ENCODE measurements at regions of chr20 and their contacts with region 1.

Region 1: GRCh38 chr20:34312544-34313217 is 9.5 kb upstream of the AHCY start:
- DNase-seq: peak; percentile 84 to 86 (median 84)
- H3K4me3 ChIP-seq: no peak overlapping the region
- H3K4me3 Mint-ChIP-seq: peak overlapping the region in 3 of 8 donors; percentile 41 to 58 (median 55)
- H3K27ac ChIP-seq: no peak overlapping the region
- H3K27ac Mint-ChIP-seq: peak overlapping the region in 2 of 7 donors; percentile 64 to 70
- H3K4me1 ChIP-seq: peaks cover 9% of the 10 kb centered on the region
- H3K4me1 Mint-ChIP-seq: peaks cover 5 to 14% (median 10%) of the 10 kb centered on the region in 4 donors
- H3K27me3 ChIP-seq: peaks cover 12% of the 10 kb centered on the region
- H3K27me3 Mint-ChIP-seq: peaks cover 16 to 23% of the 10 kb centered on the region in 2 donors

Region 2: GRCh38 chr20:34295284-34295683 is 17.4 kb before region 1 on chr20:
- CTCF ChIA-PET with region 1: interaction called, 30 read pairs
- POLR2A ChIA-PET with region 1: no interaction called
- intact Hi-C with region 1: no loop called
- DNase-seq: no peak
- H3K4me3 ChIP-seq: no peak overlapping the region
- H3K4me3 Mint-ChIP-seq: no peak overlapping the region
- H3K27ac ChIP-seq: no peak overlapping the region
- H3K27ac Mint-ChIP-seq: no peak overlapping the region
- H3K4me1 ChIP-seq: no peaks in the 10 kb centered on the region
- H3K4me1 Mint-ChIP-seq: peaks cover 0 to 3% (median 0%) of the 10 kb centered on the region in 4 donors
- H3K27me3 ChIP-seq: no peaks in the 10 kb centered on the region
- H3K27me3 Mint-ChIP-seq: no peaks in the 10 kb centered on the region

Region 3: GRCh38 chr20:34363062-34363464 is 50.4 kb after region 1 on chr20 and contains the start of gene ITCH:
- CTCF ChIA-PET with region 1: interaction called, 25 read pairs
- POLR2A ChIA-PET with region 1: interaction called, 3 read pairs
- intact Hi-C with region 1: loop called (anchors 2 kb)
- DNase-seq: peak; percentile 88 to 93 (median 89)
- H3K4me3 ChIP-seq: peak within 1 kb of the TSS; percentile 73 to 89
- H3K4me3 Mint-ChIP-seq: peak within 1 kb of the TSS; percentile 94 to 100 (median 98)
- H3K27ac ChIP-seq: peak within 1 kb of the TSS; percentile 78
- H3K27ac Mint-ChIP-seq: peak within 1 kb of the TSS; percentile 92 to 99 (median 99)
- H3K4me1 ChIP-seq: peaks cover 50% of the 10 kb centered on the region
- H3K4me1 Mint-ChIP-seq: peaks cover 21 to 51% (median 35%) of the 10 kb centered on the region in 4 donors
- H3K27me3 ChIP-seq: no peaks in the 10 kb centered on the region
- H3K27me3 Mint-ChIP-seq: peaks cover 0 to 1% of the 10 kb centered on the region in 2 donors
- total RNA-seq, gene ITCH: 59.3 to 68.9 TPM

Region 4: GRCh38 chr20:34516247-34517113 is 203.8 kb after region 1 on chr20 and contains the start of gene DYNLRB1:
- CTCF ChIA-PET with region 1: interaction called, 48 read pairs
- POLR2A ChIA-PET with region 1: interaction called, 5 read pairs
- intact Hi-C with region 1: no loop called
- DNase-seq: peak; percentile 92 to 96 (median 93)
- H3K4me3 ChIP-seq: peak within 1 kb of the TSS; percentile 91 to 99
- H3K4me3 Mint-ChIP-seq: peak within 1 kb of the TSS; percentile 93 to 100 (median 98)
- H3K27ac ChIP-seq: peak within 1 kb of the TSS; percentile 89
- H3K27ac Mint-ChIP-seq: peak within 1 kb of the TSS; percentile 96 to 99 (median 98)
- H3K4me1 ChIP-seq: peaks cover 46% of the 10 kb centered on the region
- H3K4me1 Mint-ChIP-seq: peaks cover 29 to 91% (median 52%) of the 10 kb centered on the region in 4 donors
- H3K27me3 ChIP-seq: no peaks in the 10 kb centered on the region
- H3K27me3 Mint-ChIP-seq: no peaks in the 10 kb centered on the region
- total RNA-seq, gene DYNLRB1: 75.5 to 81.0 TPM

Region 5: DNA sequence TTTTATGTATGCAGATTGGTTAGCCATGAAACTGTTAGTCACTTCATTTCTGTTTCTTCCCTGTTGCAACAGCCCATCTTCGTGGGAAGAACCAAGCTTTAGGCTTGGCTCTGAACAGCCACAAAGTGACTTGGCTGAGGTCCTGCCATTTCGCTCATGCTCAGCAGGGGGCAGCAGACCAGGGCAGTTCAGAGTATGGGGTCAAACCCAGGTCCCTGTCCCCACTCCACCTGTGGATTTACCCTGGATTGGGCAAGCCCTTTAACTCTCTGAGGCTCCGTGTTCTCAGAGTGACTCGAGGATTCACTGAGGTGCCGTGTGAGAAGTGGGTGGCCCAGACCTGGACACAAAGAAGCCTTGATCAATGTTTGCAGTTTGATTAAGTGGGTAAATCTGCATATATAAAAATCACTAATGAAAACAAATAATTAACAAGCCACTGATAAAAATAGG is 226.0 kb after region 1 on chr20:
- CTCF ChIA-PET with region 1: interaction called, 20 read pairs
- POLR2A ChIA-PET with region 1: no interaction called
- intact Hi-C with region 1: no loop called
- DNase-seq: peak in 3 of 5 donors; percentile 41 to 50 (median 47)
- H3K4me3 ChIP-seq: no peak overlapping the region
- H3K4me3 Mint-ChIP-seq: no peak overlapping the region
- H3K27ac ChIP-seq: no peak overlapping the region
- H3K27ac Mint-ChIP-seq: peak overlapping the region; percentile 29 to 73 (median 63)
- H3K4me1 ChIP-seq: peaks cover 34% of the 10 kb centered on the region
- H3K4me1 Mint-ChIP-seq: peaks cover 20 to 43% (median 33%) of the 10 kb centered on the region in 4 donors
- H3K27me3 ChIP-seq: no peaks in the 10 kb centered on the region
- H3K27me3 Mint-ChIP-seq: no peaks in the 10 kb centered on the region

Region 6: GRCh38 chr20:34549291-34549928 is 236.7 kb after region 1 on chr20:
- CTCF ChIA-PET with region 1: no interaction called
- POLR2A ChIA-PET with region 1: no interaction called
- intact Hi-C with region 1: no loop called
- DNase-seq: no peak
- H3K4me3 ChIP-seq: no peak overlapping the region
- H3K4me3 Mint-ChIP-seq: no peak overlapping the region
- H3K27ac ChIP-seq: no peak overlapping the region
- H3K27ac Mint-ChIP-seq: peak overlapping the region in 2 of 7 donors; percentile 3 to 35
- H3K4me1 ChIP-seq: peaks cover 4% of the 10 kb centered on the region
- H3K4me1 Mint-ChIP-seq: peaks cover 3 to 16% (median 6%) of the 10 kb centered on the region in 4 donors
- H3K27me3 ChIP-seq: no peaks in the 10 kb centered on the region
- H3K27me3 Mint-ChIP-seq: no peaks in the 10 kb centered on the region

Region 7: GRCh38 chr20:34704177-34705007 is 391.7 kb after region 1 on chr20 and contains the start of gene TP53INP2:
- CTCF ChIA-PET with region 1: interaction called, 30 read pairs
- POLR2A ChIA-PET with region 1: no interaction called
- intact Hi-C with region 1: loop called (anchors 1 kb)
- DNase-seq: peak; percentile 89 to 94 (median 90)
- H3K4me3 ChIP-seq: peak within 1 kb of the TSS; percentile 56 to 64
- H3K4me3 Mint-ChIP-seq: peak within 1 kb of the TSS; percentile 88 to 98 (median 95)
- H3K27ac ChIP-seq: peak within 1 kb of the TSS; percentile 90
- H3K27ac Mint-ChIP-seq: peak within 1 kb of the TSS; percentile 94 to 100 (median 99)
- H3K4me1 ChIP-seq: peaks cover 23% of the 10 kb centered on the region
- H3K4me1 Mint-ChIP-seq: peaks cover 12 to 50% (median 19%) of the 10 kb centered on the region in 4 donors
- H3K27me3 ChIP-seq: no peaks in the 10 kb centered on the region
- H3K27me3 Mint-ChIP-seq: no peaks in the 10 kb centered on the region
- total RNA-seq, gene TP53INP2: 0.86 to 1.2 TPM

Region 8: DNA sequence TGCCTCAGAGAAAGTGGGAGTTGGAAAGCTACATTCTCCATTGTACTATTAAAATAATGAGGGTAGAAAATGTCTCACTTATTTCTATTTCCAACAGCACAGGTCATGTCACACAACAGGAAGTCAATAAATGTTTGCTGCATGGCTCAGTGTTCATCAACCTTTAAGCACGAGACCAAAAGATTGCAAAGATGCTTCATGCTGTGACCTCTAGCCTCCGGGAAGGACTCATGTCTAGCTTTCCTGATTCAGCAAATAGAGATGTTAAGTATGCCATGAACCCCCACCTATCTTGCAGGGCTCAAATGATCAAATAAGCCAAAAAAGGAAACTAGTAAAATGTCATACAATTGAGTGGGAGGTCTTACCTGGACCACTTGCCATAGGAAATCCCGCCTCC is 455.4 kb after region 1 on chr20:
- CTCF ChIA-PET with region 1: interaction called, 194 read pairs
- POLR2A ChIA-PET with region 1: interaction called, 6 read pairs
- intact Hi-C with region 1: loop called (anchors 1 kb)
- DNase-seq: no peak
- H3K4me3 ChIP-seq: no peak overlapping the region
- H3K4me3 Mint-ChIP-seq: no peak overlapping the region
- H3K27ac ChIP-seq: no peak overlapping the region
- H3K27ac Mint-ChIP-seq: peak overlapping the region in 2 of 7 donors; percentile 2 to 16
- H3K4me1 ChIP-seq: no peaks in the 10 kb centered on the region
- H3K4me1 Mint-ChIP-seq: no peaks in the 10 kb centered on the region
- H3K27me3 ChIP-seq: no peaks in the 10 kb centered on the region
- H3K27me3 Mint-ChIP-seq: no peaks in the 10 kb centered on the region

Measured in CD4-positive, alpha-beta memory T cell (primary cell).